ENCODE measurements at regions of chr12 and their contacts with region 1.

Region 1: GRCh38 chr12:122965851-122966722 is at the start of gene ABCB9:
- DNase-seq: peak; percentile 96
- ATAC-seq: peak; percentile 98
- H3K4me3 Mint-ChIP-seq: peak within 1 kb of the TSS; percentile 63
- H3K27ac Mint-ChIP-seq: no peak within 1 kb of the TSS
- H3K4me1 Mint-ChIP-seq: peaks cover 4% of the 10 kb centered on the region
- H3K27me3 Mint-ChIP-seq: no peaks in the 10 kb centered on the region
- total RNA-seq, gene ABCB9: 3.6 to 4.4 TPM

Region 2: DNA sequence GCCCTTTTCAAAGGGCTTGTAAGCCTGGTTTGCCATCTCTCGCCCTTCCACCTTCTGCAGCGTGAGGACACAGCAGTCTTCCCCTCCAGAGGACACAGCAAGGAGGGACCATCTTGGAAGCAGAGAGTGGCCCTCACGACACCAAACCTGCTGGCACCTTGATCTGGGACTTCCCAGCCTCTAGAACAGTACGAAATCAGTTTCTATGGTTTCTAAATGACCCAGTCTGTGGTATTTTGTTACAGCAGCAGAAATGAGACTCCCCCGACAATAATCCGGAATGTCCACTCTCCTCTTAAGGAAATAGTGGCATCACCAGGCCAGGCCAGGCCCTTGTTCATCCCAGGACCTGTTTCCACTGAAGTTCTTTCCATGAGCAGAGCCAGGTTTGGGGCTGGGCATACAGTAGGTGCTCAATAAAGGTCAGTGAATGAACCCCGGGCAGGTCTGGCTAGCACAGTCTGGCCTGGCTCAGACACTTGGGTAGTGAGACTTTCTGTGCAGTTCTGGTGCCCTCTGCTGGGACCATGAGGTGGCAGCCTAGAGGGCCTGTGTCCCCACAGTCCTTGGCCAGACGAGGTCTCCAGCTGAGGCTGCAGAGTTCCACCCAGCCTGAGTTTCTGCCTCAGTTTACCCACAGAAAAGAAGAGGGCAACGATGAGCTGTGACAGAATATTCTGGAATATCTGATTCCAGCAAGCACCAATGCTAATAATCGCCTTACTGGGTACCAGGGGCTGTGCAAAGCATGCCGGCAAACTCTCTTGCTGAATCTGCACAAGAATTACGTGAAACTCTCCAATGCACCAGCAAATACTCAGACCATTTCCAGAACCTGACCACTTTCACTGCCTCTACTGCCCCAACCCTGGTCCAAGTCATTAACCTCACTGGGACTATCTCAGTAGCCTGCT is 13.9 kb before region 1 on chr12:
- CTCF ChIA-PET with region 1: interaction called, 10 read pairs
- DNase-seq: peak; percentile 86
- ATAC-seq: peak; percentile 99
- H3K4me3 Mint-ChIP-seq: no peak overlapping the region
- H3K27ac Mint-ChIP-seq: peak overlapping the region; percentile 40
- H3K4me1 Mint-ChIP-seq: peaks cover 16% of the 10 kb centered on the region
- H3K27me3 Mint-ChIP-seq: no peaks in the 10 kb centered on the region

Region 3: GRCh38 chr12:123115409-123116121 is 149.5 kb after region 1 on chr12:
- CTCF ChIA-PET with region 1: no interaction called
- DNase-seq: no peak
- ATAC-seq: no peak
- H3K4me3 Mint-ChIP-seq: no peak overlapping the region
- H3K27ac Mint-ChIP-seq: no peak overlapping the region
- H3K4me1 Mint-ChIP-seq: peaks cover 25% of the 10 kb centered on the region
- H3K27me3 Mint-ChIP-seq: no peaks in the 10 kb centered on the region